ENCODE measurements at regions of chr2 and their contacts with region 1.

Region 1: GRCh38 chr2:62505750-62506420 is at the start of gene TMEM17:
- DNase-seq: peak; percentile 69 to 94
- H3K4me3 ChIP-seq: peak within 1 kb of the TSS; percentile 67 to 74
- H3K27ac ChIP-seq: peak within 1 kb of the TSS; percentile 85 to 88
- H3K4me1 ChIP-seq: peaks cover 0 to 2% of the 10 kb centered on the region in 2 donors
- H3K27me3 ChIP-seq: no peaks in the 10 kb centered on the region
- CTCF ChIP-seq: no peak
- total RNA-seq, gene TMEM17: not detected

Region 2: DNA sequence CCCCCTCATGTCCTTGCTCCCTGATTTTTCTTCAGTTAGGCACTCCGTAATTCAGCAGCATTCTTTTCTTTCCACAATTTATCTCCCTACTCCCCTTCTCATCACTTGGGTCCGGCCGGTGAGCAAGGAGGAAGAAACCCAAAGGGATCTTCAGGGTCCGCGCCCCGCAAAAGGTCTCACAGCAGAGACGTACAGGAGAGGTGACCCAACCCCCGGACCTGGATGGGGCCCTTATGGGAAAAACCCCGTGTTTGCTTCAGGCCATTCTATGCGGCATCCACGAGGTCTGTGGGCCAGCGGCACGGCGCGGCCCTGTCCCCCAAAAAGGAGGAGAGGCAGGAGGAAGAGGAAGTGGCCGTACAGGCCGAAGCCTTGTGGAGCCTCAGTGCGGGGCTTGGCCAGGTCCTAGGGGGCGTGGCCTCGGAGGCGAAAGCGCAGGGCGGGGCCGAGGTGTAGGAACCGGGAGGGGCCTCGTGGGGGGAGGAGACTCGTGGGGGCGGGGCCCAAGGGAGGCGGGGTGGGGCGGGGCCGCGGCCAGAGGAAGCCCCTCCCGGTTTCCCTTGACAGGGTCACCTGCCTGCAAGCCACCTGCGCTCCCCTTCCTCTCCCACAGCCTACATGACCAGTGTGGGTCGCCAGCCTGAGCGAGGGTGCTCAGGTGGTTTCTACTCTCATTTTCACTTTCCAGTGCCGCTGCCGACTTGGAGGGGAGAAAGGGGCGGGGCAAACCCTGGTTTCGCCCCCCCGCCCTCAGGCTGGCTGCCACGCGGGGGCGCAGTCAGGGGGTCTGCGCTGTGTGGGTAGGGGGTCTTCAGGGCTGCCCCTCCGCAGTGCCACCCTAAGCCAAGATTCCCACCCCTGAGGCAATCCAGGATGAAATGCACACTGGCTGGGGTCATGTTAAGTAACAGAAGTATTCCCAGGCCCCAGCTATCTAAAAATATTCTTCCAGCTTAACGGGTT is 811.3 kb before region 1 on chr2:
- intact Hi-C with region 1: loop called (anchors 10 kb)
- DNase-seq: peak; percentile 66 to 96
- H3K4me3 ChIP-seq: peak overlapping the region; percentile 63 to 71
- H3K27ac ChIP-seq: peak overlapping the region; percentile 61 to 67
- H3K4me1 ChIP-seq: no peaks in the 10 kb centered on the region
- H3K27me3 ChIP-seq: no peaks in the 10 kb centered on the region
- CTCF ChIP-seq: peak; percentile 23 to 62 (median 33)

Region 3: DNA sequence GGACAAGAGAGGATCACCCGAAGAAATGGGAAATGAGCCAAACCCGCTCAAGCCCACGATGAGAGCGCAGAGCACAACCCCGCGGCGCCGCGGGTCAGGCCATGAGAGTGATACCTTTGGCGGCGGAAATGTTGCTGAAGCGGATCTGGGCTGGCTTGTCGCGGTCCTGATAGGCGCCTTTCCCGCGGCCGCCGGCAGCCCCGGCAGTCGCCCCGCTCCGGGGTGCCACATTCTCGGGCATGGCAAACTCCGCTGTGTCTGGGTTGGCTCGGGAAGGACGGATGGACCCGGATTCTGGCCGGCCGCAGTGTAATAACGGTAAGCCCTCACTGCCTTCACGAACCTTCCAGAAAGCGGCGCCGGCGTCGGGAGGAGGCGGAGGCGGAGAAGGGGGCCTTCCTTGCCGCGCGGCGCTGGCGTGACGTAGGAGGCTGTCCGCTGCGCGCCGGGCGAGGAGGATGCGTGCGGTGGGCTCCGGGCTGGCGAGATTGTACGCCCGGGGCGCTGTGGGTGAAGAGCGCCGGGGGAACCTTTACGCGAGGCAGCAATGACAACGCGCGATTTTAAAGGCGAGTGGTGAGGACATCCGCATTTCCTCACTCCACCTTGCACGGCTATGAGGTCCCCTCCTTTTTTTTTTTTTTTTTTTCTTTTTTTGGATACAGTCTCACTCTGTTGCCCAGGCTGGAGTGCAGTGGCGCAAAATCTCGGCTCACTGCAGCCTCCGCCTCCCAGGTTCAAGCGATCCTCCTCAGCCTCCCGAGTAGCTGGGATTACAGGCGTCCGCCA is 617.4 kb before region 1 on chr2 and contains the start of gene CCT4:
- intact Hi-C with region 1: loop called (anchors 5 kb)
- DNase-seq: peak; percentile 38 to 91
- H3K4me3 ChIP-seq: peak within 1 kb of the TSS; percentile 76 to 99
- H3K27ac ChIP-seq: peak within 1 kb of the TSS; percentile 92 to 97
- H3K4me1 ChIP-seq: peaks cover 3 to 6% of the 10 kb centered on the region in 2 donors
- H3K27me3 ChIP-seq: no peaks in the 10 kb centered on the region
- CTCF ChIP-seq: no peak
- total RNA-seq, gene CCT4: 35.3 TPM

Region 4: DNA sequence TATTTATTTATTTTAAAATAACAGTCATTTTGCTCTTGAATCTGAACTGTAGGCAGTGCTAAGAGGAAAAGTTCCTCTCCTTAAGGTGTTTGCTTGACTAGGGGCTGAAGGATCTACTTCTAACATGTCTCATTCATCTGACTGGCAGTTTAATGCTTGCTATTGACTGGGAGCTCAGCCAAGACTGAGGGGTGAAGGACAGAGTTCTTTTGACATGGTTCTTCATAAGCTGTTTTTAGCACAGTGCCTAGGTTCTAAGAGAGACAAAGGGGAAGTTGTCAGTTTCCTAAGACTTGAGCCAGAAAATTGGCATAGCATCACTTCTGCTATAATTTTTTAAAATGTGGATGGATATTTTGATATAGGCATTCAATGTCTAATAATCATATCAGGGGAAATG is 527.4 kb before region 1 on chr2:
- intact Hi-C with region 1: no loop called
- DNase-seq: no peak
- H3K4me3 ChIP-seq: no peak overlapping the region
- H3K27ac ChIP-seq: peak overlapping the region in 1 of 2 donors; percentile 19
- H3K4me1 ChIP-seq: peaks cover 0 to 3% of the 10 kb centered on the region in 2 donors
- H3K27me3 ChIP-seq: no peaks in the 10 kb centered on the region
- CTCF ChIP-seq: no peak

Region 5: DNA sequence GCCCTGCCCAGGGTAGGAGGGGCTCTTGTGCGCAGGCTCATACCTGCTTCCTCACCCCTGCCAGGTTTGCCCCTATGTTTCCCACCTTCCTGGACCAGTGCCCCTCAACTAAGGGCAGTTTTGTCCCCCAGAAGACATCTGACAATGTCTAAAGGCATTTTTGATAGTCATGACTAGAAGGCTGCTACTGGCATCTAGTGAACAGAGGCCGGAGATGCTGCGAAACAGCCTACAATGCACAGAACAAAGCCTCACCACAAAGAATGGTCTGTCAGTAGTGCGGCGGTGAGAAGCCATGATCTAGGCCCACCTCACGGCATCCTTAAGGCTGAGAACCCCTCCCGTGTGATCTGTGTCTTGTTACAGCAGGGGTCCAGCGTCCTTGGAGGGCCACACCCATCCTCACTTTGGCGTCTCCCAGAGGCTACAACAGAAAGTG is 95.9 kb before region 1 on chr2:
- intact Hi-C with region 1: loop called (anchors 2 kb)
- DNase-seq: no peak
- H3K4me3 ChIP-seq: no peak overlapping the region
- H3K27ac ChIP-seq: peak overlapping the region; percentile 22 to 90
- H3K4me1 ChIP-seq: peaks cover 0 to 19% of the 10 kb centered on the region in 2 donors
- H3K27me3 ChIP-seq: no peaks in the 10 kb centered on the region
- CTCF ChIP-seq: no peak

Region 6: DNA sequence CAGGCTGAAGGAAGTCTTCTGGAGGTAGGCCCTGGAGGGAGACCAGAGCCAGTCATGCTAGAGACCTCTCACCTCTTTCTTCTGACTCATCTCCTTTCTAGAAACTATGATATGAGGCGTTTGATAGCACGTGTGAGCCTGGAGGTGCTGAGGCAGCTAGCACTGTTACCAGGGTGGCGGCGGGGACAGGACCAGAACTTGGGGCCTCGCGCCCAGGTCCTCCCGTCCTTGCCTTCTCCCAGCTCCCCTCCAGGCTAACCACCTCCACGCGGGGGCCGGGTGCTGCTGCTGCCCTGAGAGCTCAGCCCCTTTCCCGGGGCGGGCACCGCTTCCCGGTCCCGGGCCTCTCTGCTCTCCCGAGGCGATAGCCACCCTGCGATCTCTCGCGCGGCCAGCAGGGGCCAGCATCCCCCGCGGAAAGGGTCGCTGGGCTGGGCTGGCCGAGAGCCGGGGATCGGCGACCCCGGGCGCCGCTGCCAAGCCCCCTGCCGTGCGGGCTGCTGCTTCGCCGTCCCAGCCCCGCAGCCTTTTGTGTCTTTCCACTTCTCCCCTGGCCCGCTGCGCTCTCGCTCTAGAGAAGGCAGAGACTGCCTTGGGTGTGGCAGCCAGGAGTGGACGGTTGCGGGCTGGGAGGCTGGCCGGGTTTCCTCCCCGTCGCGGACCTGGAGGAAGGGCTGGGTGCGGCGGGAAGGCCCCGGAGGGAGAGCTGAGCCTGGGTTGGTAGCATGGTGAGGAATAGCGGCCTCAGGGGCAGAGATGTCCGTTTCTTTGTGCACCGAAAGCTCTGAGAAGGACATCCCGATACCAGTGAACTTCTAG is 49.0 kb before region 1 on chr2:
- intact Hi-C with region 1: loop called (anchors 5 kb)
- DNase-seq: peak in 1 of 2 donors; percentile 81
- H3K4me3 ChIP-seq: peak overlapping the region; percentile 47 to 85
- H3K27ac ChIP-seq: peak overlapping the region in 1 of 2 donors; percentile 35
- H3K4me1 ChIP-seq: peaks cover 0 to 2% of the 10 kb centered on the region in 2 donors
- H3K27me3 ChIP-seq: no peaks in the 10 kb centered on the region
- CTCF ChIP-seq: peak; percentile 97 to 99 (median 97)

Region 7: GRCh38 chr2:62495761-62496160 is 10.1 kb before region 1 on chr2:
- intact Hi-C with region 1: no loop called
- DNase-seq: no peak
- H3K4me3 ChIP-seq: no peak overlapping the region
- H3K27ac ChIP-seq: no peak overlapping the region
- H3K4me1 ChIP-seq: no peaks in the 10 kb centered on the region
- H3K27me3 ChIP-seq: no peaks in the 10 kb centered on the region
- CTCF ChIP-seq: no peak

Region 8: DNA sequence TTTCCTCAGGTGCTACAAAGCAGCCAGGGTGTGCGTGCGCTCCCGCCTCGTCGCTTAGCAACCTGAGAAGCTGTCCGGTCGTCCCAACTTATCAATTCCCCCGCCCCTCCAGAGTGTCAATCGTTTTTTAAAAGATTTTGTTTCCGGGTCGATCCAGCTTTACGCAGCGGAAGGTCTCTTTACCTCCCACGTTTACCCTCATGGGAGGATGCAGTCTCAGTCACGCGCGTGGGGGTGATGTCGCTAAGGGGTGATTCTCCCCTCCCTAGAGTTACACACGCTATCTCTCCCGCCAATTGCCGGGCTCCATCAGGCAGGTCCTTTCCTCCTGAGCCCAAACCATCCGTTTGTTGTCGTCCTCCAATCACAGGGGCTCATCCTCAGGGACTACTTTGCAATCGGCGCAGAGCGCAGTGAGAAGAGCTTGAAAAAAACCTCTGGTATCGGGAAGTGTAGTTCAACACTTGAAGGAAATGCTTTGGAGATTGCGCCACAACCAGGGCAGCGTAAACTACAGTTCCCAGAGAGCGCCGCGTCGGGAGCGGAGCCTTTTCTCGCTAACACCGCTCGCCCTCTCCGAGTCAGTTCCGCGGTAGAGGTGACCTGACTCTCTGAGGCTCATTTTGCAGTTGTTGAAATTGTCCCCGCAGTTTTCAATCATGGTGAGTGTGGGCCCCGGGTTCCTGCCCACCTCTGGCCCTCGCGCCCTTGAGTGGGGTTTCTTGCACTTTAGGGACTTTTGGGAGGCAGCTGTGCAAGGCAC is 1082.7 kb after region 1 on chr2 and contains the starts of genes MDH1 and WDPCP:
- intact Hi-C with region 1: loop called (anchors 1 kb)
- DNase-seq: peak; percentile 90 to 97
- H3K4me3 ChIP-seq: peak within 1 kb of the TSS; percentile 66 to 83
- H3K27ac ChIP-seq: peak within 1 kb of the TSS; percentile 88
- H3K4me1 ChIP-seq: peaks cover 5 to 16% of the 10 kb centered on the region in 2 donors
- H3K27me3 ChIP-seq: no peaks in the 10 kb centered on the region
- CTCF ChIP-seq: no peak
- total RNA-seq, gene MDH1: 65.7 TPM
- total RNA-seq, gene WDPCP: 5.2 TPM

Measured in ascending aorta (tissue), 2 donors.